IMR-90 (cell line): ENCODE measurements at regions of chr6 and their contacts with region 1.

Region 1: DNA sequence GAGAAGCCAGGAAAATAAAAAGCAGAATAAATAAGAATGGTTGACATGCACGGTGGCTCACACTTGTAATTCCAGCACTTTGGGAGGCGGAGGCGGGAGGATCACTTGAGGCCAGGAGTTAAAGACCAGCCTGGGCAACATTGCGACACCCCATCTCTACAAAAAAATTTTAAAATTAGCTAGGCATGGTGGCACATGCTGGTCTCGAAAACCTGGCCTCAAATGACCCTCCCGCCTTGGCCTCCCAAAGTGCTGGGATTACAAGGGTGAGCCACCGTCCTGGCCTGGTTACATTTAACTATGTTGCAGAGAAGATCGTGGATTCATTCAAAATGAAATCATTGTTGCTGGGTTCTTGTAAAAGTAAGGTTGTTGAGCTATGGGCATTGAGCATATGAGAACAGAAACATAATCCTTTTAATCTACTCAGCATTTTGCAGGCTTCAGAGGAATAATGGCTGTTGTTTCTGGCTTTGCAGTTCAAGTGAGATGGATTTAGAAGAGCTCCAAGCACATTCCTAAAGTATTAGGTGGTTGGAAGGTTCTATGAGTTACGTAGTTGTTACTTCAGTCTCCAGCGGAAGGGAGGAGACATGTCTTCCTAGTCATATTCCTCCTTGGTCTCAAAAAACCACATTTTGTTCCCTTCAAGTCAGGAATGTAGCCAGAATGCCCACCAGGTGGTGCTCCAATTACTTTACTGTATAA is 45.6 kb upstream of the RAB23 start:
- DNase-seq: peak; percentile 99
- ATAC-seq: peak; percentile 89
- H3K4me3 ChIP-seq: no peak overlapping the region
- H3K27ac ChIP-seq: peak overlapping the region; percentile 93
- H3K4me1 ChIP-seq: peaks cover 16% of the 10 kb centered on the region
- H3K27me3 ChIP-seq: no peaks in the 10 kb centered on the region
- CTCF ChIP-seq: peak; percentile 85
- POLR2A ChIP-seq: no peak
- RAD21 ChIP-seq: peak; percentile 70

Region 2: DNA sequence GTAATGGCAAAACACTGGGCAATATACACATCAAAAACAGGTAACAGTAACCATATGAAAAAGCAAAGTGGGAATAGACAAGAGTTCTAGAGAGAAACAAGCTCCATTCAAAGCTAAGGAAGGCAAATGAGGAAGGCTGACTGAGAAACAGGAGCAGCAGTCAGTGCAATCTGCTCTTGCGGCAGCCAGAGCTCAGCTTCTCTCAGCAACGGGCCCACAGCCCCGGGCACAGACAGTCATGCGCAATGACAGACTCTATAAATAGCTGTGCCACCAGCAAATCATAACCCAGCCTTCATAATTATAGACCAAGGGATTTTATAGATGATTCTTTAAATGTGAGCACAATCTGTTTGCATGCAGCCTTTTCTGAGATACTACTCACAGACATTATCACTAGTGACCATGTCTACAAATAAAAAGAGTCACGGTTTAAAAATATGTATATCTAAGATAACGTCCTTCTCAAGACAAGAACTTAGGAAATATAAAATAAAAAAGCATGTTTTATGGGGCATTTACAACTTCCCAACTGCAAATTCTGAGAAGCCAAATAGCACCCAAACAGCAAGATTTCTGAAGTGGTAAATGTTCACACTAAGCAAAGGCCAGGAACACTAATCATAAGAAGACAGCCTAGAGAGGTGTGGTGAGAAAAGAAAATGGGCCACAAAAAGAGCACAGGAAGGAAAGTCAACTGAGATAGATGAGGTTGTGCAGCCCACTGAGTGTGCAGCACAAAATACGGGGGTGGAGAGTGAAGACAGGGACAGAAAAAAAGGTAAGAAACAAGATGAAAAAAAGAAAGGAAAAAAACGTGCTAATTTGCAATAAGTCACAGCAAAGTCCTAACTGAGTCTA is 352.7 kb before region 1 on chr6:
- CTCF ChIA-PET with region 1: no interaction called
- POLR2A ChIA-PET with region 1: no interaction called
- dilution Hi-C with region 1: no loop called
- in situ Hi-C with region 1: no loop called
- intact Hi-C with region 1: loop called (anchors 5 kb)
- DNase-seq: no peak
- ATAC-seq: no peak
- H3K4me3 ChIP-seq: no peak overlapping the region
- H3K27ac ChIP-seq: no peak overlapping the region
- H3K4me1 ChIP-seq: peaks cover 11% of the 10 kb centered on the region
- H3K27me3 ChIP-seq: no peaks in the 10 kb centered on the region
- CTCF ChIP-seq: no peak
- POLR2A ChIP-seq: no peak
- RAD21 ChIP-seq: no peak

Region 3: GRCh38 chr6:57162516-57162915 is 105.2 kb before region 1 on chr6:
- CTCF ChIA-PET with region 1: no interaction called
- POLR2A ChIA-PET with region 1: no interaction called
- dilution Hi-C with region 1: no loop called
- in situ Hi-C with region 1: no loop called
- intact Hi-C with region 1: no loop called
- DNase-seq: peak; percentile 19
- ATAC-seq: peak; percentile 57
- H3K4me3 ChIP-seq: no peak overlapping the region
- H3K27ac ChIP-seq: peak overlapping the region; percentile 37; the same call in 1 of the 2 replicates
- H3K4me1 ChIP-seq: peaks cover 15% of the 10 kb centered on the region
- H3K27me3 ChIP-seq: no peaks in the 10 kb centered on the region
- CTCF ChIP-seq: no peak
- POLR2A ChIP-seq: no peak
- RAD21 ChIP-seq: no peak

Region 4: DNA sequence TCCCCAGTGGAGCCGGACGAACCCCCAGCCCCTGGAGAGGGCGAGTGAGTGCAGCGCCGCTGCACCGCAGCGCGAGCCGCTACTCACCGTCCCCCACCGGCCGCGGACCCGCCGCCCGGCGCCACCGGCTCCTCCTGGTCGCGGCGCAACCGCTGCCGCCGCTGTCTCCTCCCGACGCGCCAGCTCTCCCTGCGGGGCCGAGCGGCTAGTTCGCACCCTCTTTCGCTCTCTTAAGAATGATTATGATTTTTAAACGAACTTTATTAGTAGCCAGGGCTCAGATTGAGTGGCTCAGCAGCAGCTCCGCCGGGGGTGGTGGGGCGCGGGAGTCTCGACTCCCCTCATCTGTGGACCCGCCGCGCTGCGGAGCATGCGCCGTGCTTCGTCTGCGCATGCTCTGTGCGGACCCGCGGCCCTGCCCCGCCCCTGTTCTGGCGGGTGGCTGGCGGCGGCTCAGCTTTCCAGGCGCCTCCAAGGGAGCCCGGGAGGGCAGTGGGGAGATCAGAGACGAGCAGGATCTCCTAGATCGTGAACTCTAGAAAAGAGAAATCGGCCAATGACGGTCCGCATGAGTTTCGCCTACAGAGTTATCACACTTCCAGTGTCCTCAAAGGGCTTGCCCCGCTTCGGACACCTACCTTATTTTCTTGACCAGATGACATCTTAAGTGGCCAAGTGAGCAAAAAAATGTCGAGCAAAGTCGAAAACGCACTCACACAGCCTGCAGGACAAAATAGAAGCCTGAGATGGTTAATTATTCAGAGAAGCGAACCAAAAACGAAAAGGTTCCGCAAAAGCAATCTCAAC is 45.6 kb before region 1 on chr6 and contains the start of gene RAB23:
- CTCF ChIA-PET with region 1: interaction called, 3 read pairs
- POLR2A ChIA-PET with region 1: no interaction called
- dilution Hi-C with region 1: no loop called
- in situ Hi-C with region 1: no loop called
- intact Hi-C with region 1: loop called (anchors 2 kb)
- DNase-seq: peak; percentile 77
- ATAC-seq: peak; percentile 79
- H3K4me3 ChIP-seq: peak within 1 kb of the TSS; percentile 85
- H3K27ac ChIP-seq: peak within 1 kb of the TSS; percentile 99
- H3K4me1 ChIP-seq: peaks cover 5% of the 10 kb centered on the region
- H3K27me3 ChIP-seq: no peaks in the 10 kb centered on the region
- CTCF ChIP-seq: no peak
- POLR2A ChIP-seq: peak; percentile 85
- RAD21 ChIP-seq: no peak
- total RNA-seq, gene RAB23: 13.3 and 28.9 TPM in 2 replicates